ENCODE measurements at regions of chr15 and their contacts with region 1.

Region 1: DNA sequence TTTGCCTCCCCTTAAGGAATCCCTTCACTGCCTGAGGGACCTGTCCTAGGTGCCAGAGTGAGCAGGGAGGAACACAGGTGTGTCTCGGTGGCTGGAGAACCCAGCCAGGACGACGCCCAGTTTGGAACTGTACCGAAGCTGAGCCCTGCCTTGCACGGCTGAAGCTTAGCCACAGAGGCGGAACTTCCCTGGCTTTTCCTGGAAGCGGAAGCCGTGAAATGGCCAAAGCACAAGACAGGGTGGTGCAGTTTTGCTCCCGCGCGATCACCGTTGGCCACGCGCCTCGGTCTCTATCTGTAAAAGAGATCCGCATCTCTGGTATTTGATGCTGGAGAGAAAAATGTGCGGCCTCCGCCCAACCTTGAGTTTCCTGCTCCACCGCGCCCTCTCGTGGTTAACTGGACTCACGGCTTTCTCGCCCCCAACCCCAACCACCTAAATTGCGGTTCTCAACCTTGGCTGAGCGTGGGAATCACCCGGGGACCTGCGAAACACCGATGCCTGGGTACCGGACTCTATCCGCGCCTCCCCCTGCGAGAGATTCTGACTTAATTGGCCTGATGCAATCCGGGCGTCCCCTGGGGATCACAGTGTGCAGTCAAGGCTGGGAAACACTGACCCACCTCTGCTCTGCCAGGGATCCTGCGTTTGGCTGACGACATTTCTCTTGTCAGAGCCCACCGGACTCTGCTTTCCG is 70.7 kb upstream of the ABHD2 start:
- DNase-seq: peak; percentile 90 to 93
- ATAC-seq: peak; percentile 82
- H3K4me3 ChIP-seq: no peak overlapping the region
- H3K27ac ChIP-seq: peak overlapping the region; percentile 80 to 95
- H3K4me1 ChIP-seq: peaks cover 4% of the 10 kb centered on the region in 2 donors
- H3K27me3 ChIP-seq: no peaks in the 10 kb centered on the region

Region 2: DNA sequence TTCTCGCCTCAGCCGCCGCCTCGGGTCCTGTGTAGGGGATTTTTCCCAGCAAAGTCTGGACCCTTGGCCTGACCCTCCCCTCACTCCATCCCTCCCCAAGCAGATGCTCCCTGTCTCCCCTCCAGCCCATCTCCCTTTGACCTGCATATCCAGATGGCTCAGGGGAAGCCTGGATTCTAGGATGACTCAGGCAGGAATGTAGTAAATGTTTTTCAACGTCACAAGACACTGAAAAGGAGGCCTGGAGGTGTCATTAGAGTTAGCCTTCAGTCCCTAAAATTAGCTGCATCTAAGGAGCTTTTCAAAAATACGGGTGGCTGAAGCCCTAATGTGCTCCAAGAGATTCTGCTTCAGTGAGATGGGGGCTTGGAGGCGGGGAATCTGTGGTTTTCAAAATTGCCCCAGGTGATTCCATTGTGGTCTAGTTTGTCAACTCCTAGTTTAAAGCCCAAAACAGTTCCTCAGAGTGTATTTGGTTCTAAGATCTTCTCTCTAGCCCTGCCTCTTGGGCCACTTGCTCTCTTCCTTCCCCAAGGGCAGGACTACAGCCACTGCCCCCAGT is 207.0 kb before region 1 on chr15:
- intact Hi-C with region 1: no loop called
- DNase-seq: no peak
- ATAC-seq: no peak
- H3K4me3 ChIP-seq: no peak overlapping the region
- H3K27ac ChIP-seq: no peak overlapping the region
- H3K4me1 ChIP-seq: no peaks in the 10 kb centered on the region
- H3K27me3 ChIP-seq: no peaks in the 10 kb centered on the region

Region 3: DNA sequence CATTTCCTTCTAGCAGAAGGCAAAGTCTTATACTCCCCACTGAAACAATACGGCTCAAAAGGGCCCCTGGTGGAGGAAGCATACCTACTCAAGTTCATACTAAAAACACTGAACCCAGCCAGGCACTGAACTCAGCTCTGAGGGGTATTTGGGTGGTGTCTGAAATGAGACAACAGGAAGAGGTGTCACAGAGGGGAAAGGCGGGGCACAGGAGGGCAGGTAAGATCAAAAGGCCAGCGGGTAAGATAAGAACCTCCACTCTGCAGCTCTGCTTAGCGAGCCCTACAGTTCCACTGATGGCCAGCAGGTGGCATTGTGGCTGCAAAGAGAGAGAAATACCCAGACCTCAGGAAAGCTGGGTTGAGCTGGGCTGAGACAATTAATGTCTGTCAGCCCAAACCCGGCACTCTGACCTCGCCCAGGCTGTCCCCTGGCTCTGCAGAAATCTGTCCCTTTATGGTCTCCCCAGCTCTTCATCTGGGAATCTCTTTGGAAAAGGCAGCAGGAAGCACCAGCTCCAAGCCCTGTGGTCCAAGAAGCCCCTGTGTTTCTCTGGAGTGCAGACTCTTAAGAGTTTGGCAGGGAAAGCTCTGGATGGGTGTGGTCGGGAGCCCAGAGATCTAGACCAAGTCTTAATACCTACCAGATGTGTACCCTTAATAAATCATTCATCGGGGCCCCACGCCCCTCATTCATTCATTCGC is 112.7 kb before region 1 on chr15:
- intact Hi-C with region 1: loop called in 1 of 2 experiments (anchors 2 kb)
- DNase-seq: peak; percentile 86 to 95
- ATAC-seq: peak; percentile 87
- H3K4me3 ChIP-seq: no peak overlapping the region
- H3K27ac ChIP-seq: peak overlapping the region in 1 of 2 donors; percentile 74
- H3K4me1 ChIP-seq: peaks cover 0 to 2% of the 10 kb centered on the region in 2 donors
- H3K27me3 ChIP-seq: no peaks in the 10 kb centered on the region

Region 4: GRCh38 chr15:88913017-88913849 is 104.3 kb before region 1 on chr15 and contains the start of gene MFGE8:
- intact Hi-C with region 1: loop called (anchors 2 to 5 kb)
- DNase-seq: peak; percentile 86 to 94
- ATAC-seq: peak; percentile 87
- H3K4me3 ChIP-seq: peak within 1 kb of the TSS; percentile 81 to 86
- H3K27ac ChIP-seq: peak within 1 kb of the TSS; percentile 80 to 93
- H3K4me1 ChIP-seq: no peaks in the 10 kb centered on the region
- H3K27me3 ChIP-seq: no peaks in the 10 kb centered on the region
- total RNA-seq, gene MFGE8: 1,647 to 2,143 TPM

Region 5: DNA sequence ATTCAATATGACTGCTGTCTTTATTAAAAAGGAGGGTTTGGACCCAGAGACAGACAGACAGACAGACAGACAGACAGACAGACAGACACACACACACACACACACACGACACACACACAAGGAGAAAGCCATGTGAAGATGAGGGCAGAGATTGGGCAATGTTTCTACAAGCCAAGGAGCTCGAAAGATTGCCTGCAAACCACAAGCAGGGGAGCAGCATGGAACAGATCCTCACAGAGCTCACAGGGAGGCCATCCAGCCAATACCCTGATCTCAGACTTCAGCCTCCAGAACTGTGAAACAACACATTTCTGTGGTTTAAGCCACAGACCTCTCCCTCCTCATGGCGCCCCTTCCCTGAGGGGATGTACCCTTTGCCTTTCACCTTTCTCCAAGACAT is 35.0 kb after region 1 on chr15:
- intact Hi-C with region 1: loop called in 1 of 2 experiments (anchors 5 kb)
- DNase-seq: no peak
- ATAC-seq: peak; percentile 52
- H3K4me3 ChIP-seq: no peak overlapping the region
- H3K27ac ChIP-seq: peak overlapping the region; percentile 51 to 99
- H3K4me1 ChIP-seq: peaks cover 0 to 8% of the 10 kb centered on the region in 2 donors
- H3K27me3 ChIP-seq: no peaks in the 10 kb centered on the region

Region 6: DNA sequence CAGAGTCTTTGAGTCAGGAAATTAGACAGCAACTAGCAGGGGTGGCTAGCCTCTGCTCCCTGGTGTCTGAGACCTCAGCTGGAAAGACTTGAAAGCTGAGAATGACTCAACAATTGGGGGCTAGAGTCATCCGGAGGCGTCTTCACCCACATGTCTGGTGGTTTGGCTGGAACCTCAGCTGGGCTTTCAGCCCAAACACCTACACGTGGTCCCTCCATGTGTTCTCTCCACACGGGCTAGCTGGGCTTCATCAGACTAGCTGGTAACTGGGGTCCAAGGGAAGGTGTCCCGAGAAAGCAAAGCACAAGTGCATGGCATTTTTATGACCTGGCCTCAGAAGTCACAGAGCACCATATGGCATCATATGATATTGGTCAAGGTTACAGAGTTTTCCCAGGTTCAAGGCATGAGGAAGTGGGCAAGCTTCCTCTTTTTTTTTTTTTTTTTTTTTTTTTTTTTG is 50.8 kb after region 1 on chr15:
- intact Hi-C with region 1: no loop called
- DNase-seq: peak in 1 of 2 donors; percentile 58
- ATAC-seq: no peak
- H3K4me3 ChIP-seq: no peak overlapping the region
- H3K27ac ChIP-seq: no peak overlapping the region
- H3K4me1 ChIP-seq: no peaks in the 10 kb centered on the region
- H3K27me3 ChIP-seq: no peaks in the 10 kb centered on the region

Region 7: GRCh38 chr15:89087830-89088604 is 70.5 kb after region 1 on chr15 and contains the start of gene ABHD2:
- intact Hi-C with region 1: loop called in 1 of 2 experiments (anchors 5 kb)
- DNase-seq: peak; percentile 99 to 100
- ATAC-seq: peak; percentile 97
- H3K4me3 ChIP-seq: peak within 1 kb of the TSS; percentile 74 to 93
- H3K27ac ChIP-seq: peak within 1 kb of the TSS; percentile 88 to 97
- H3K4me1 ChIP-seq: peaks cover 0 to 3% of the 10 kb centered on the region in 2 donors
- H3K27me3 ChIP-seq: no peaks in the 10 kb centered on the region
- total RNA-seq, gene ABHD2: 135 to 221 TPM

Region 8: DNA sequence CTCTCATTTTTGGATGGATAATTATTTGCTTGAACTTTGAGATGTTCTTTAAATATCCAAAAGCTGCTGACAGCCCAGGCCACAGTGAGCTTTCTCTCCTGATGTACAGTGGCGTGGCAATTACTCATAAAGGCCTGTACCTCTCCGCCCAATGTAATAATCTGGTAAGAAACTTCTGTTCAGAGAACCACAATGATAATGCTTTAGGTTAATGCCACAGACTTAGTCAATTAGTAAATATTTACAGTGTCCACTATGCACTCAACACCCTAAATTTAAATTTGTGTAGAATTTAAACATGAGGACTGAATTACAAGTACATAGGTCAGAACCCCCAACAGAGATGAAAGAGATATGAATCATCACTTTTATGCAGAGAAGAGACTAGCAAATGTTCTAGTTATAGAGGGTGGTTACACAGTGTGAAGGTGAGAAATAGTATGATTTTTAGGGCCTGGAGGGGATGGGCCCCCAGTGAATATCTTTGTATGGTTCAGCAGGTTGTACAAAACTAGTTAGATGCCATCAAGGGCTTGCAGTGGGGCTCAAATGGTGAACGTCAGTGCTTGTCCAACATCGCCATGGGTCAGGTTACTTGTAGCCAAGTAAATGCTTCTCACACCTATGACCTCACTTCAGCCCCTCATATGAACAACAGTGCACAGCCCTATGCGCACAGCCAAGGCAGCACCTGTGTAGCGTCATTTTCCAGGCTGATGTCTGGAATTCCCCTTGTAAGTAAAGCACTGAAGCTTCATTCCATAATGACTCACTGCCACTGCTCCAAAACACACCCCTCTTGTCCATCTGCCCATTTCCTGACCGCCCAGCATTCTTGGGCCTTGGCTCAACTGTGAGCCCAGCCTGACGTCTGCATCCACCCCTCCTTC is 84.0 kb after region 1 on chr15:
- intact Hi-C with region 1: loop called in 1 of 2 experiments (anchors 5 kb)
- DNase-seq: peak; percentile 88 to 91
- ATAC-seq: peak; percentile 92
- H3K4me3 ChIP-seq: no peak overlapping the region
- H3K27ac ChIP-seq: peak overlapping the region; percentile 64 to 98
- H3K4me1 ChIP-seq: peaks cover 12 to 26% of the 10 kb centered on the region in 2 donors
- H3K27me3 ChIP-seq: no peaks in the 10 kb centered on the region

Region 9: DNA sequence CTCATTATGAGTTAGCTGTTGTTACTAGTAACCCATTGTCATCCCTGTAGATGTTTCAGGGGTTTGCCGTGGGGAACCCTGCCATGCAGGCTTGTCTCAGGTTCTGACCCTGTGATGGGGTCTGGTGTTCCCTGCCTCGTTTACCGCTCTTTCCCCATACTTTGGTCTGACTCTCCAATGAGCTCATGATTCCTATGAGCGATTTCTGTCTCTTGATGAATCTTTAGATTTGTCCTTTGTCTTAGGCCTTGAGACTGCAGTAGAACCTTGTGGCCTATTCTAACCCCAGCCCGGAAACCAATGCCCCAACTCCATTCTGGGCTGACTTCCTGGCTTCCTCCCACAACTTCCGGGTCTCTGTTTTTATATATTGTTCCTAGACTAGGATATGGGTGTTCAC is 1359.3 kb after region 1 on chr15:
- intact Hi-C with region 1: no loop called
- DNase-seq: no peak
- ATAC-seq: no peak
- H3K4me3 ChIP-seq: no peak overlapping the region
- H3K27ac ChIP-seq: no peak overlapping the region
- H3K4me1 ChIP-seq: no peaks in the 10 kb centered on the region
- H3K27me3 ChIP-seq: no peaks in the 10 kb centered on the region